PC-9 (cell line): ENCODE measurements at regions of chr12 and their contacts with region 1.

Region 1: DNA sequence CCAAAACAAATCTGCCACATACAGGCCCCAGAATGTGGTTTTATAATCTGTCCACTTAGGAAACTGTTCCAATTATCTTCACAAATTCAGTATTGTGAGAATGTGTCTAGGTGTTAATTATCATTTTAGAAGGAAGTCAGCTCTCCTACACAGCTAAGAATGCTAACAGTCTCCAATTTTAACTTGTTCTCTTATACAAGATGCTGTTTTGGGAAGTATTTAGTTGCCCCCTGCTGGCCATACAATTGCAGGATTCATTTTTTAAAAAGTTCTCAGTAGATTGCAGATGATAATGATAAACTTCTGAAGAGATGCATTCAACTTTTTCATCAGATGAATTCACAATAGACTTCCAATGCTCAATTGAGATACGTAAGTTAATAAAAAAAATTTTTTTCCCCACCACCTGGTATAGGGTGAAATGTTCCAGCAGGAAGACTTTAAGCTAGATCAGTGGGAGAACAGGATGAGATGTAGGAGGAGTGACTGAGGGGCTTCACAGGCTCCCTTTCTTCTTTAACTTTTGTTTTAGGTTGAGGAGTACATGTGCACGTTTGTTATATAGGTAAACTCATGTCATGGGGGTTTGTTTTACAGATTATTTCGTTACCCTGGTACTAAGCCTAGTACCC is 27.3 kb upstream of the OSBPL8 start:
- DNase-seq: peak in 1 of 2 experiments; percentile 10
- H3K4me3 ChIP-seq: no peak overlapping the region
- H3K27ac ChIP-seq: no peak overlapping the region
- H3K4me1 ChIP-seq: no peaks in the 10 kb centered on the region
- H3K27me3 ChIP-seq: no peaks in the 10 kb centered on the region
- CTCF ChIP-seq: peak; percentile 82

Region 2: DNA sequence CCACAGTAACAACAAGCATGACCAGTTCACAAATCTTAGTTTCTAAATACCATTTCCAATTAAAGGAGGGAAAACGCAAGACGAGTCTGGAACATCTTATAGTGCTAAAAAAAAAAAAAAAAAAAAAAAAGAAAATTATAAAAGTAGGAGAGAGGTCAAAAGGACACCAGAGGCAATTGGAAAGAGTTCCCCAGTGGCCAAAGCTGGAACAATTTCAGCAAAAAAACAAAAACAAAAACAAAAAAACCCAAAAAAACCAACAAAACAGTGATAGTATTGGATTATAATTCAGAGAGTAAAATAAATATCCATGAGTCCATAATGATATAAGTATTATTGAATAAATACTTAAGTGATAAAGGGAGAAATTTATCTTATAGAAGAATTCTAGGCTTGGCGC is 492.1 kb before region 1 on chr12:
- CTCF ChIA-PET with region 1: no interaction called
- POLR2A ChIA-PET with region 1: interaction called, 11 read pairs
- intact Hi-C with region 1: no loop called
- DNase-seq: no peak
- H3K4me3 ChIP-seq: no peak overlapping the region
- H3K27ac ChIP-seq: no peak overlapping the region
- H3K4me1 ChIP-seq: no peaks in the 10 kb centered on the region
- H3K27me3 ChIP-seq: no peaks in the 10 kb centered on the region
- CTCF ChIP-seq: no peak

Region 3: GRCh38 chr12:76462668-76463224 is 124.1 kb before region 1 on chr12:
- CTCF ChIA-PET with region 1: no interaction called
- POLR2A ChIA-PET with region 1: no interaction called
- intact Hi-C with region 1: loop called (anchors 10 kb)
- DNase-seq: no peak
- H3K4me3 ChIP-seq: no peak overlapping the region
- H3K27ac ChIP-seq: no peak overlapping the region
- H3K4me1 ChIP-seq: no peaks in the 10 kb centered on the region
- H3K27me3 ChIP-seq: no peaks in the 10 kb centered on the region
- CTCF ChIP-seq: no peak